Panc1 (cell line): ENCODE measurements at regions of chr9 and their contacts with region 1.

Region 1: GRCh38 chr9:98784831-98785806 is 11.2 kb downstream of the ANKS6 start:
- DNase-seq: no peak
- ATAC-seq: no peak
- H3K4me3 ChIP-seq: no peak overlapping the region
- H3K27ac ChIP-seq: no peak overlapping the region
- H3K4me1 ChIP-seq: no peaks in the 10 kb centered on the region
- H3K27me3 ChIP-seq: no peaks in the 10 kb centered on the region
- CTCF ChIP-seq: no peak

Region 2: DNA sequence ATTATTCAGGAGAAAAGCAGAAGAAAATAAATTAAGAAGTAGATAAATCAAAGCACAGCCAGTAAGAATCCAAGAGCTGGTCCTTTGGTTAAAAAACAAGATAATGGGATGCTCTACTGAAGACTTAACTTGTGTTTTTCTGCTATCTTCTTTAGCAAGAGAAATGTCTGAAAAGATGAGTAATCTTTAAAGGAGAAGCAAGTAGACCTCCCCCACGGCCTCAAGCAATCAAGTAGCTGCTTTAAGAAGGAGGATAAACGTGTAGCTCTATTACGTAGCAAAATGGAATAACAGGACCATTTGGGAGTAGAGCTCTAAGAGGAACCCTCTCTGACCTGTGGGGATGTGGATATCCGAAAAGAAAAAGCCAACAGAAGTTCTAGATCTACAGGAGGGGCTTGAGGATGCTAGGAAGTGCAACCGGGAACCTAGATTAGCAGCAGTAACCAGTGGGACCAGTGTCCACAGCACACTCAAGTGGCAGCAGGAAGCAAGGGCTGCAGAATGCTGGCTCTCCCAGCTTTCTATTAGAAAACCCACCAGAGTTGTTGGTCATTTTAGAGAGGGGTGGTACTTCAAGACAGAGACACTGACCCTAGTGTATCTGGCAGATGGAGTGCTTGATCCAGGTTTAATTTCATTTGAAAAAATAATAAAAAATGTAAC is 261.8 kb before region 1 on chr9:
- CTCF ChIA-PET with region 1: no interaction called
- POLR2A ChIA-PET with region 1: no interaction called
- in situ Hi-C with region 1: no loop called
- intact Hi-C with region 1: no loop called
- DNase-seq: no peak
- ATAC-seq: no peak
- H3K4me3 ChIP-seq: no peak overlapping the region
- H3K27ac ChIP-seq: no peak overlapping the region
- H3K4me1 ChIP-seq: no peaks in the 10 kb centered on the region
- H3K27me3 ChIP-seq: no peaks in the 10 kb centered on the region
- CTCF ChIP-seq: peak; percentile 42

Region 3: GRCh38 chr9:98558575-98558974 is 226.5 kb before region 1 on chr9:
- CTCF ChIA-PET with region 1: no interaction called
- POLR2A ChIA-PET with region 1: interaction called, 21 read pairs
- in situ Hi-C with region 1: no loop called
- intact Hi-C with region 1: no loop called
- DNase-seq: no peak
- ATAC-seq: no peak
- H3K4me3 ChIP-seq: no peak overlapping the region
- H3K27ac ChIP-seq: no peak overlapping the region
- H3K4me1 ChIP-seq: no peaks in the 10 kb centered on the region
- H3K27me3 ChIP-seq: no peaks in the 10 kb centered on the region
- CTCF ChIP-seq: no peak